ENCODE measurements at regions of chr19 and their contacts with region 1.

Region 1: GRCh38 chr19:42244347-42245220 is 2.2 kb upstream of the GSK3A start:
- DNase-seq: peak; percentile 87 to 89
- ATAC-seq: peak; percentile 53 to 54
- H3K4me3 ChIP-seq: peak overlapping the region; percentile 55 to 77 (median 73)
- H3K27ac ChIP-seq: peak overlapping the region; percentile 86 to 95 (median 87)
- H3K4me1 ChIP-seq: peaks cover 36 to 39% of the 10 kb centered on the region in 2 donors
- H3K27me3 ChIP-seq: no peaks in the 10 kb centered on the region
- CTCF ChIP-seq: peak; percentile 40 to 77 (median 64)
- POLR2A ChIP-seq: peak; percentile 59 to 71

Region 2: DNA sequence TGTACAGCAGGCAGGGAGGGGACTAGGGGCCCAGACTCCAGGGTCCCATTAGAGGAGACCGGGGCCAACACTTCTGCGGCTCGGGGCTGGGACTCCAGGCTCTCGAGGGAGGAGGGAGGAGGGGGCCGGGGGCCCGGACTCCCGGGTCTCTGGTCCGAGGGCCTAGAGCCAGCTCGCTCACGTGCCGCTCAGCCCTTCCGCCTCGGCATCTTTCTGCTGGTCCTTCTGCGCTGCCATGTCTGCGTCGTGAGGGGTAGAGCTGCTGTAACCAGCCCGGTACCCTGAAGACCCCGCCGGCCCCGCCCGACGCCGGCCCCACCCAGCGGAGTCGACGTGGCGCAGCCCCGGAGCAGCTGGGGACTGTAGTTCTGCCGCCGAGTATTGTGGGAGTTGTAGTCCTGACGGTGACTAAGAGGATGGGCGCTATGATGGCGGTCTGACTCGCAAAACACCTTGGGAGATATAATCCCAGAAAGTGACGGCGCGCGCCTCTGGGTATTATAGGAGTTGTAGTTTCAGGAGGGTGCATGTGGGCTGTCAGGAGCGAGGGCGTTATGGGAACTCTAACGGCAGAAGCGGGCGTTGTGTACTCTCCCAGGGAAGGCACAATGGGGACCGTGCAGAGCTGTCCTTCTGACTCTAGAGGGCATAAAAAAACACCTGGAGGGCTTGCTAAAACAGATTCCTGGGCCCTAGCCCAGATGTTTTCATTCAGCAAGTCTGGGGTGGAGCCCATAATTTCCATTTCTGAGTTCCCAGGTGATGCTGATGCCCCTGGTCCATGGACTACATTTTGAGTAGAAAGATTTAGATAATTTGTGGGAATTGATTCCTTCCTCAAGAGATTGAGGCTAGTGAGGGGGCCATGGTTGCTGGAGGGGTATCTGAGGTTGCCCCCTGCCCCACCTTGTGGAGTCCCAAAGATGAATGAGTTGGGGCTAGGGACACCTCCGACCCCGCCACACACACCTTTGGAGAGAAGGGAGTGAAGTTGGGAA is 285.2 kb before region 1 on chr19 and contains the start of gene RABAC1:
- in situ Hi-C with region 1: no loop called
- intact Hi-C with region 1: loop called (anchors 10 kb)
- DNase-seq: peak; percentile 81 to 83
- ATAC-seq: peak; percentile 96
- H3K4me3 ChIP-seq: peak within 1 kb of the TSS; percentile 63 to 96 (median 92)
- H3K27ac ChIP-seq: peak within 1 kb of the TSS; percentile 82 to 89 (median 86)
- H3K4me1 ChIP-seq: peaks cover 11 to 15% of the 10 kb centered on the region in 2 donors
- H3K27me3 ChIP-seq: no peaks in the 10 kb centered on the region
- CTCF ChIP-seq: no peak
- POLR2A ChIP-seq: peak in 1 of 2 donors; percentile 32
- total RNA-seq, gene RABAC1: 94.4 to 146 (median 110) TPM

Region 3: DNA sequence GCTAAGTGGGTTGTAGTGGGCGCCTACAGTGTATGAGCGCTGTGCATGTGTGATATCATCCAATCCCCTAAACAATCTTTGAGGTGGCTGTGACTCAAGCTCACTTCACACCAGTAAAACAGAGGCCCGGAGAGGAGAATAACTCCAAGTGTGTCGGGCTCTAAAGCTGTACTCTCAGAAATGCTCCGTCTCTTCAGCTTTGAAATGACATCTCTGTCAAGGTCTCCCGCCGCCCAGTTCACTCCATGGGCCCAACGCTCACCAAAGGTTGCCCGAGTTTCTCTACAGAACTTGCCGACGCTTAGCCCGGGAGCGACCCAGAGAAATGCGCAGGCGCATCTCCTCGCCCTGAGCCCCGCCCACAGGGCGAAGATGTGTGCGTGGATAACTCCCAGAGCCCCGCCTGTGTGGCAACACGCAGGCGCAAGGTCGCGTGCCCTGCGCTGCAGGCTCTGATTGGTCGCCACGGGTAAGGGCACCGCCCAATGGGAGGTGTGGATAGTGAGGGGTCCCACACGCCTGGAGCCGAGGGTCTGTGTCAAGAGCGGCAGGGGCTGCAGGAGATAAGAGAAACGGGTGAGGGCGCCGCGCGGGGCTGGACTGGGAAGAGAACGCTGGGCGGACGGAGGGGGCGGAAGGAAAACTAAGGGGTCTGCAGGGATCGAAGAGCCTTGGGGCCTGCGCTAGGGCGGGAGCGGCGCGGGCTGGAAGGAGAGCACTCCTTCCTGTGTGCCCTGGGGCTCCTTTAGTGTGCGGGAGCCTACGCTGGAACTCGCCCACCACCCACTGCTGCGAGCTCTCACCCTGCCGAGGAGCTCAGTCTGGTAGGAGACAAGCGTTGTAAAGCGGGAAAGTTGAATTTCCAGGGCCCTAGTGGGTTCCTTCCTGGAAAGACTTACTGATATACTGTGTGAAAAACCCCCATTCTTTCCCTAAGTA is 24.5 kb before region 1 on chr19 and contains the start of gene ZNF526:
- in situ Hi-C with region 1: no loop called
- intact Hi-C with region 1: loop called (anchors 1 kb)
- DNase-seq: peak; percentile 96 to 98
- ATAC-seq: peak; percentile 83 to 84
- H3K4me3 ChIP-seq: peak within 1 kb of the TSS; percentile 71 to 90 (median 88)
- H3K27ac ChIP-seq: peak within 1 kb of the TSS; percentile 86 to 97 (median 94)
- H3K4me1 ChIP-seq: peaks cover 35 to 46% of the 10 kb centered on the region in 2 donors
- H3K27me3 ChIP-seq: no peaks in the 10 kb centered on the region
- CTCF ChIP-seq: no peak
- POLR2A ChIP-seq: peak; percentile 68 to 79
- total RNA-seq, gene ZNF526: 3.3 to 5.8 (median 4.9) TPM

Region 4: GRCh38 chr19:42254989-42255765 is 10.6 kb after region 1 on chr19 and contains the start of gene ERF:
- in situ Hi-C with region 1: no loop called
- intact Hi-C with region 1: no loop called
- DNase-seq: peak; percentile 68 to 80
- ATAC-seq: peak; percentile 40 to 54
- H3K4me3 ChIP-seq: peak within 1 kb of the TSS; percentile 60 to 90 (median 76)
- H3K27ac ChIP-seq: peak within 1 kb of the TSS; percentile 91 to 94 (median 92)
- H3K4me1 ChIP-seq: peaks cover 28 to 30% of the 10 kb centered on the region in 2 donors
- H3K27me3 ChIP-seq: peaks cover 24 to 40% (median 37%) of the 10 kb centered on the region in 3 donors
- CTCF ChIP-seq: peak in 1 of 5 experiments; percentile 24
- POLR2A ChIP-seq: peak; percentile 80 to 96
- total RNA-seq, gene ERF: 14.0 to 26.7 (median 14.8) TPM

Region 5: GRCh38 chr19:42268704-42269477 is 24.3 kb after region 1 on chr19 and contains the start of gene CIC:
- in situ Hi-C with region 1: no loop called
- intact Hi-C with region 1: loop called (anchors 1 kb)
- DNase-seq: peak; percentile 100
- ATAC-seq: peak; percentile 84 to 91
- H3K4me3 ChIP-seq: peak within 1 kb of the TSS; percentile 68 to 79 (median 74)
- H3K27ac ChIP-seq: peak within 1 kb of the TSS; percentile 95 to 98 (median 97)
- H3K4me1 ChIP-seq: peaks cover 30% of the 10 kb centered on the region in 2 donors
- H3K27me3 ChIP-seq: no peaks in the 10 kb centered on the region
- CTCF ChIP-seq: no peak
- POLR2A ChIP-seq: peak in 1 of 2 donors; percentile 18
- total RNA-seq, gene CIC: 15.2 to 52.2 (median 41.5) TPM

Region 6: DNA sequence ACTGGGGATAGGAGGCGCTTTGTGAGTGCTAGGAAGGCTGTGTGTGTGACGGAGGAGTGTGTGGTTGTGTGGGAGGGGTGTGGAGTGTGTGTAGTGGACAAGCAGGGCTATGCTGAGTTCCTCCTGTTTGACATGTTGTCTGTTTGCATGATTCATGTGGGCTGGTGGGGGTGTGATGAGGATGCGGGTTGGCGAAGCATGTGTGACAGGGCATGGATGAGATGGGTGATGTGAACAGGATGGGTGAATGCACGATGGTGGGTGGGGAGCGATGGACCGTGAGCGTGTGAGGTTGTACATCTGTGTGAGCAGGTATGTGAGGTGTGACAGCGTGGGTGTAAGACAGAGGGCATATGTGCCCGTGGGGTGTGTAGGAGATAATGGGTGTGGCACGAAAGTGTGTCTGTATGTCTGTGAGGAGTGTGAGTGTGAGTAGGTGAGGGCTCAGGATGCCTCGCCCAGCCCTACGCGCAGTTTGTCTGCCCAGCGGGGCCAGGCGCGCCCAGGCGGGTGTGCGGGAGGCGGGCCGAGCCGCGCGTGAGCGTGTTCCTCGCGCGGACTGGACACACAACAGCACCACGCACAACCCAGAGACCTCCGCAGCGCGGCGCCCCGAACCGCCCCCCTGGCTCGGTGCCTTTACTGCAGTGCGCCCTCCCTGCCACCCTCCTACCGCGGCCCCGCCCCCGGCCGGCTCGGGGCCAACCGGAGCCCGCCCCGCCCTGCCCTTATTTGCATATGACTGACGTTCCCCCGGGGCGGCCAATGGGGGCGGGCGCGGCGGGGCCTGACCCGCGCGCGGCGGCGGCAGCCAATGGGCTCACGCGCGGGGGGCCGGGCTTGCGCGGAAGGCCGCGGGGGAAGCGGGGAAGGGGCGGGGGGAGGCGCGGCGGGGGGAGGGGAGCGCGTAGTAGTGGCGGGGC is 38.8 kb after region 1 on chr19:
- in situ Hi-C with region 1: loop called in 1 of 4 experiments (anchors 5 kb)
- intact Hi-C with region 1: loop called (anchors 1 kb)
- DNase-seq: peak; percentile 89 to 96
- ATAC-seq: peak; percentile 64 to 71
- H3K4me3 ChIP-seq: peak overlapping the region; percentile 43 to 60 (median 58)
- H3K27ac ChIP-seq: peak overlapping the region; percentile 95 to 97 (median 96)
- H3K4me1 ChIP-seq: peaks cover 58 to 64% of the 10 kb centered on the region in 2 donors
- H3K27me3 ChIP-seq: no peaks in the 10 kb centered on the region
- CTCF ChIP-seq: no peak
- POLR2A ChIP-seq: peak in 1 of 2 donors; percentile 68

Region 7: GRCh38 chr19:42295831-42296525 is 51.4 kb after region 1 on chr19:
- in situ Hi-C with region 1: no loop called
- intact Hi-C with region 1: loop called (anchors 1 kb)
- DNase-seq: peak; percentile 55 to 74
- ATAC-seq: peak; percentile 64 to 84
- H3K4me3 ChIP-seq: no peak overlapping the region
- H3K27ac ChIP-seq: no peak overlapping the region
- H3K4me1 ChIP-seq: no peaks in the 10 kb centered on the region
- H3K27me3 ChIP-seq: no peaks in the 10 kb centered on the region
- CTCF ChIP-seq: peak; percentile 84 to 98 (median 92)
- POLR2A ChIP-seq: no peak

Region 8: GRCh38 chr19:42306646-42307045 is 62.1 kb after region 1 on chr19:
- in situ Hi-C with region 1: no loop called
- intact Hi-C with region 1: no loop called
- DNase-seq: no peak
- ATAC-seq: no peak
- H3K4me3 ChIP-seq: no peak overlapping the region
- H3K27ac ChIP-seq: no peak overlapping the region
- H3K4me1 ChIP-seq: peaks cover 15 to 16% of the 10 kb centered on the region in 2 donors
- H3K27me3 ChIP-seq: peaks cover 0 to 3% (median 2%) of the 10 kb centered on the region in 3 donors
- CTCF ChIP-seq: no peak
- POLR2A ChIP-seq: no peak

Region 9: GRCh38 chr19:42396381-42397262 is 152.0 kb after region 1 on chr19:
- in situ Hi-C with region 1: no loop called
- intact Hi-C with region 1: loop called (anchors 10 kb)
- DNase-seq: peak; percentile 96 to 98
- ATAC-seq: peak; percentile 98 to 99
- H3K4me3 ChIP-seq: peak overlapping the region; percentile 60 to 66 (median 63)
- H3K27ac ChIP-seq: peak overlapping the region; percentile 69 to 81 (median 74)
- H3K4me1 ChIP-seq: peaks cover 10 to 18% of the 10 kb centered on the region in 2 donors
- H3K27me3 ChIP-seq: no peaks in the 10 kb centered on the region
- CTCF ChIP-seq: no peak
- POLR2A ChIP-seq: peak; percentile 62 to 65

Measured in gastrocnemius medialis (tissue), 4 donors.